MCF 10A (cell line): ENCODE measurements at regions of chr4 and their contacts with region 1.

Region 1: DNA sequence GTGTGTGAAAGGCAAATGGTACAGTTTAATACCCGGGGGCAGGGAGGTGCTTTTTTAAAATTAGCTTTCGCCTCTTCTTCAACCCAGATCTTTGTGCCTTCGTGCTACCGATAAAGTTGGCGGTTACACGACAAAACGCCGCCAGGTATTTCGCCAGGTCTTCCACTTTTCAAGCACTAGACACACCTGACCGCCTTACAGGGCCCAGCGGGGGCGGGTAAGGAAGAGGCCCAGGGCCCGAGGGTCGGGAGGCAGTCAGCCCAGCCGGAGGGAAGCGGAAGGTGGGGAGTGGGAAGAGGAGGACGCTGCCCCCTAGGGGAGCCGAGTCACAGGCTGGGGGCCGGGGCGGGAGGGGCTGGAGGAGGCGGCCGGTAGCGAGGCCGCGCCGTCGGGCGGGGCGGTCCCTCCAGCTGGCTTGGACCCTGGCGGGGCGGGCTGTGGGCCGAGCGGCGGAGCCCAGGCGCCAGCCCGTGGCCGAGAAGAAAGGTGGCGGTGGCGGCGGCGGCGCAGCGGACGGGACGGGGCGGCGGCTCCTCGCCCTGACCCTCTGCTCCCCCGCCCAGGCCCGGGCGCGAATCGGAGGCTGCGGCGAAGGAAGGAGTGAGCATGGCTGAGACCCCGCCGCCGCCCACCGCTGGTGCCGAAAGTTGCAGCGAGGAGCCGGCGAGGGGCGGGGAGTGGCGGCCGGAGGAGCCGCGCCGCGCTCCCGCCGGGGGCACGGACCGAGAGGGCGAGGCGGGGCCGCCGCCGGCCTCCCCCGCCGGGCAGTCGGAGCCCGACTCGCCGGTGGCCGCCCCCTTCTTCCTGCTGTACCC is 16.2 kb downstream of the UTP3 start:
- DNase-seq: peak; percentile 72
- H3K4me3 Mint-ChIP-seq: peak overlapping the region; percentile 93
- H3K27ac Mint-ChIP-seq: peak overlapping the region; percentile 84
- H3K4me1 Mint-ChIP-seq: peaks cover 11% of the 10 kb centered on the region
- H3K27me3 Mint-ChIP-seq: no peaks in the 10 kb centered on the region
- CTCF ChIP-seq: peak; percentile 19

Region 2: GRCh38 chr4:70670332-70671014 is 34.1 kb before region 1 on chr4:
- CTCF ChIA-PET with region 1: no interaction called
- POLR2A ChIA-PET with region 1: interaction called, 15 read pairs
- intact Hi-C with region 1: no loop called
- DNase-seq: peak; percentile 17
- H3K4me3 Mint-ChIP-seq: no peak overlapping the region
- H3K27ac Mint-ChIP-seq: peak overlapping the region; percentile 2
- H3K4me1 Mint-ChIP-seq: no peaks in the 10 kb centered on the region
- H3K27me3 Mint-ChIP-seq: peaks cover 12% of the 10 kb centered on the region
- CTCF ChIP-seq: no peak

Region 3: GRCh38 chr4:70721747-70722146 is 17.2 kb after region 1 on chr4 and contains the start of gene RUFY3:
- CTCF ChIA-PET with region 1: interaction called, 3 read pairs
- POLR2A ChIA-PET with region 1: interaction called, 13 read pairs
- intact Hi-C with region 1: no loop called
- DNase-seq: no peak
- H3K4me3 Mint-ChIP-seq: no peak within 1 kb of the TSS
- H3K27ac Mint-ChIP-seq: no peak within 1 kb of the TSS
- H3K4me1 Mint-ChIP-seq: no peaks in the 10 kb centered on the region
- H3K27me3 Mint-ChIP-seq: no peaks in the 10 kb centered on the region
- CTCF ChIP-seq: no peak
- total RNA-seq, gene RUFY3: 42.7 and 48.7 TPM in 2 replicates

Region 4: GRCh38 chr4:70839589-70840093 is 135.1 kb after region 1 on chr4 and contains the start of gene GRSF1:
- CTCF ChIA-PET with region 1: no interaction called
- POLR2A ChIA-PET with region 1: interaction called, 59 read pairs
- intact Hi-C with region 1: loop called (anchors 5 kb)
- DNase-seq: peak; percentile 92
- H3K4me3 Mint-ChIP-seq: peak within 1 kb of the TSS; percentile 95
- H3K27ac Mint-ChIP-seq: peak within 1 kb of the TSS; percentile 92
- H3K4me1 Mint-ChIP-seq: peaks cover 9% of the 10 kb centered on the region
- H3K27me3 Mint-ChIP-seq: no peaks in the 10 kb centered on the region
- CTCF ChIP-seq: no peak
- total RNA-seq, gene GRSF1: 60.2 and 69.3 TPM in 2 replicates